H1 (cell line): ENCODE measurements at regions of chr10 and their contacts with region 1.

Region 1: GRCh38 chr10:101297901-101298486 is 56.0 kb upstream of the BTRC start:
- DNase-seq: peak; percentile 74 to 96
- H3K4me3 ChIP-seq: no peak overlapping the region
- H3K27ac ChIP-seq: no peak overlapping the region
- H3K4me1 ChIP-seq: peaks cover 0 to 3% (median 0%) of the 10 kb centered on the region in 4 experiments; a peak in 1 of 7 replicates
- H3K27me3 ChIP-seq: peaks cover 7 to 39% (median 29%) of the 10 kb centered on the region in 4 experiments
- CTCF ChIP-seq: peak; percentile 88 to 98 (median 96)
- EP300 ChIP-seq: no peak
- POLR2A ChIP-seq: no peak
- RAD21 ChIP-seq: peak; percentile 51 to 61

Region 2: GRCh38 chr10:101189541-101190401 is 108.2 kb before region 1 on chr10:
- CTCF ChIA-PET with region 1: no interaction called
- POLR2A ChIA-PET with region 1: no interaction called
- DNase-seq: peak; percentile 21 to 64
- H3K4me3 ChIP-seq: peak overlapping the region in 1 of 4 experiments; percentile 5; a peak in 1 of 8 replicates
- H3K27ac ChIP-seq: no peak overlapping the region
- H3K4me1 ChIP-seq: peaks cover 0 to 18% (median 9%) of the 10 kb centered on the region in 4 experiments; a peak in 6 of 7 replicates
- H3K27me3 ChIP-seq: no peaks in the 10 kb centered on the region; a peak in 2 of 7 replicates
- CTCF ChIP-seq: no peak
- EP300 ChIP-seq: no peak
- POLR2A ChIP-seq: no peak
- RAD21 ChIP-seq: no peak

Region 3: GRCh38 chr10:101311185-101312066 is 13.4 kb after region 1 on chr10:
- CTCF ChIA-PET with region 1: interaction called, 254 read pairs
- POLR2A ChIA-PET with region 1: interaction called, 5 read pairs
- DNase-seq: peak in 1 of 2 experiments; percentile 74
- H3K4me3 ChIP-seq: peak overlapping the region in 2 of 4 experiments; percentile 23 to 49; a peak in 5 of 8 replicates
- H3K27ac ChIP-seq: no peak overlapping the region
- H3K4me1 ChIP-seq: peaks cover 0 to 13% (median 3%) of the 10 kb centered on the region in 4 experiments; a peak in 5 of 7 replicates
- H3K27me3 ChIP-seq: no peaks in the 10 kb centered on the region; a peak in 1 of 7 replicates
- CTCF ChIP-seq: no peak
- EP300 ChIP-seq: 0 out of 3 replicates have a peak, but pooled peaks of 1 of the 2 experiments have one; percentile 40
- POLR2A ChIP-seq: no peak; a peak in 1 of 3 replicates
- RAD21 ChIP-seq: no peak; a peak in 1 of 4 replicates

Region 4: GRCh38 chr10:101330631-101331225 is 32.7 kb after region 1 on chr10:
- CTCF ChIA-PET with region 1: interaction called, 11 read pairs
- POLR2A ChIA-PET with region 1: no interaction called
- DNase-seq: no peak
- H3K4me3 ChIP-seq: no peak overlapping the region
- H3K27ac ChIP-seq: no peak overlapping the region
- H3K4me1 ChIP-seq: peaks cover 0 to 3% (median 0%) of the 10 kb centered on the region in 4 experiments; a peak in 2 of 7 replicates
- H3K27me3 ChIP-seq: no peaks in the 10 kb centered on the region
- CTCF ChIP-seq: no peak
- EP300 ChIP-seq: no peak
- POLR2A ChIP-seq: no peak
- RAD21 ChIP-seq: no peak

Region 5: DNA sequence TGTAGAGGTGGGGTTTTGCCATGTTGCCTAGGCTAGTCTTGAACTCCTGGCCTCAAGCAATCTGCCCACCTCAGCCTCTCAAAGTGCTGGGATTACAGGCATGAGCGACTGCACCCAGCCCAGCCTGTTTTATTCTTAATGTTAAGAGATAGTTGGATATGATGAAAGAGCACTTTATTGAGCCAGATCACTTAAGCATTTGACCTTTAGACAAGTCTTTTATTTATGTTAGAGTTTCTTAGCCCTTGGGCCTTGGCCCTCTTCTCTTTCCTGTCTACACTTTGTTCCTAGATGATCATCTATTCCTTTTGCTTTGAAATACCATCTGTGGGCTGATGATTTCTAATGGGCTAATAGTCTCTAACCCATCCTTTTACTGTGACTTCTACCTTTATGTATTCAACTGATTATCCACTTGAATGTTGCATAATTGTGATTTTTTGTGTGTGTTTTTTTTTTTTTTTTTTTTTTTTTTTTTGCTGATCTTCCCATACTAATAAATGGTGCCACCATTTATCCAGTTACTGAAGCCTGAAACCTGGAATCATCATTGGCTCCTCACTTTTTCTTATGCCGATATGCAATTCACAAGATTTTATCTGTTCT is 90.8 kb after region 1 on chr10:
- CTCF ChIA-PET with region 1: no interaction called
- POLR2A ChIA-PET with region 1: no interaction called
- DNase-seq: no peak
- H3K4me3 ChIP-seq: no peak overlapping the region
- H3K27ac ChIP-seq: no peak overlapping the region
- H3K4me1 ChIP-seq: no peaks in the 10 kb centered on the region
- H3K27me3 ChIP-seq: no peaks in the 10 kb centered on the region
- CTCF ChIP-seq: no peak
- EP300 ChIP-seq: no peak
- POLR2A ChIP-seq: no peak
- RAD21 ChIP-seq: no peak

Region 6: GRCh38 chr10:101441541-101442455 is 143.8 kb after region 1 on chr10:
- CTCF ChIA-PET with region 1: interaction called, 417 read pairs
- POLR2A ChIA-PET with region 1: interaction called, 4 read pairs
- DNase-seq: no peak
- H3K4me3 ChIP-seq: no peak overlapping the region
- H3K27ac ChIP-seq: no peak overlapping the region
- H3K4me1 ChIP-seq: peaks cover 0 to under 1% (median 0%) of the 10 kb centered on the region in 4 experiments; a peak in 1 of 7 replicates
- H3K27me3 ChIP-seq: no peaks in the 10 kb centered on the region
- CTCF ChIP-seq: peak in 2 of 3 experiments; percentile 80 to 83; a peak in 3 of 4 replicates
- EP300 ChIP-seq: no peak
- POLR2A ChIP-seq: no peak
- RAD21 ChIP-seq: peak; percentile 93 to 95